ENCODE measurements at regions of chr11 and their contacts with region 1.

Region 1: GRCh38 chr11:23112987-23113886 is 253.0 kb upstream of the CCDC179 start:
- DNase-seq: peak; percentile 63
- ATAC-seq: peak; percentile 70
- H3K4me3 ChIP-seq: no peak overlapping the region
- H3K27ac ChIP-seq: peak overlapping the region; percentile 75; the same call in 1 of the 2 replicates
- H3K4me1 ChIP-seq: peaks cover 9% of the 10 kb centered on the region
- H3K27me3 ChIP-seq: no peaks in the 10 kb centered on the region
- CTCF ChIP-seq: peak; percentile 80
- POLR2A ChIP-seq: no peak
- RAD21 ChIP-seq: peak; percentile 90

Region 2: DNA sequence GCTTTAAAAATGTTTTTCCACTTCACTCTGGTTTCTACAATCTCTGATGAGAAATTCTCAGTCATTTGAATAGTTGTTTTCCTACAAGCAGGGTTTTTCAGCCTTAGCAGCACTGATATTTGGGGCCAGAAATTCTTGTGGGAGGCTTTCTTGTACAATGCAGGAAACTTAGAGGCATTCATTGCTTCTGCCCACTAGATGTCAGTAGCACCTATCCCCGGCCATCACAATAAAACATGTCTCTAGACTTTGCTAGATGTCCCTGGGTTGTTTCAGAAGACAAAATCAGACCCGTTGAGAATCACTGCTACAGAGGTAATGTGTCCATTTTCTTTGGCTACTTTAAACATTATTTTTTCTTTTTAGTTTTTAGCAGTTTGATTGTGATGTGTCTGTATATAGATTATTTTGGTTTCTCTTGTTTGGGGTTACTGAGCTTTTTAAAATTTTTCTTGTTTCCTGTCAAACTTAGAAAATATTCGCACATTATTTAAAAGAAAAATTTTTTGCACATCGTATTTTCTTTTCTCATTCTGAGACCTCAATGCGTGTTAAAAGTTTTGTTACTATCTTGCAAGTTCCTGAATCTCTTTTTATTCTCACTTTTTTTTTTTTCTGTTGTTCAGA is 192.2 kb before region 1 on chr11:
- CTCF ChIA-PET with region 1: no interaction called
- POLR2A ChIA-PET with region 1: no interaction called
- dilution Hi-C with region 1: no loop called
- in situ Hi-C with region 1: no loop called
- intact Hi-C with region 1: loop called (anchors 1 kb)
- DNase-seq: peak; percentile 76
- ATAC-seq: peak; percentile 95
- H3K4me3 ChIP-seq: no peak overlapping the region
- H3K27ac ChIP-seq: no peak overlapping the region
- H3K4me1 ChIP-seq: peaks cover 2% of the 10 kb centered on the region; the same call in 1 of the 2 replicates
- H3K27me3 ChIP-seq: no peaks in the 10 kb centered on the region
- CTCF ChIP-seq: peak; percentile 79
- POLR2A ChIP-seq: no peak
- RAD21 ChIP-seq: peak; percentile 76

Region 3: DNA sequence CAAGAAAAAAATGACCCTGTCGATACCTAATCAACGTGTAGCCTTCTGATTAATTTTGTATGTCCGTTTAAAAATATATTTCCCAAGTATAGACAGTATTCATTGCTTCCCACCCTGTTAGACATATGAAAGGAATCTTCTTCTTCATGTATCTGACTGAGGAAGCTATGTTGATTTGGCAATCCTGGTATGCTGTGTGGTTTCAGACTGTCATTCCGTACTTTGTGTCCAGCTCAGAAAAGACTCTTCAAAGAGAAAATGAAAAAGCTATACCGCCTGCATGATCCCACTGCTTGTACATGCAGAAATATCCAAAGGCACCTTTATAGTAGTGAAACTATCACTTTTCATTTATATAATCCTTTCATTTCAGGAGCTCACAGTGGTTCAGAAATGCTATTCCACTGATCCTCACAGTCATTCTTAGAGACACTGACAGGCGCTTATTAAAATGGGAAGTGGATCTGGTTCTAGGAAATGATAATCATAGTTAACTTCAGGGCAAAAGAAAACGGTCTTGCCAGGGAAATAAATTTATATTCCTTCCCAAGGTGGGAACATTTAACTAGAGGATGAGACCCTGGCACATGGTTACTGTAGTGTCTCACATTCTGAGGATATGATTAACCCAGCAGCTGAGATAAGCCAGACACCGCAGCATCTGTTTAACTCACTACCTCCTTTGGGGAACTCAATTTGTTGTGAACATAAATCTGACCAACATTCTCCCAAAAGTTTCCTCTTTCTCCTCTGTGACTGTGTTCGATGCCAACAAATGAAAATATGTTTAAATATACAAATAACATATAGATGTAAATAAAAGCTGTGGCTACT is 784.4 kb after region 1 on chr11:
- CTCF ChIA-PET with region 1: no interaction called
- POLR2A ChIA-PET with region 1: no interaction called
- dilution Hi-C with region 1: no loop called
- in situ Hi-C with region 1: no loop called
- intact Hi-C with region 1: loop called (anchors 10 kb)
- DNase-seq: peak; percentile 94
- ATAC-seq: peak; percentile 92
- H3K4me3 ChIP-seq: peak overlapping the region; percentile 29; the same call in 1 of the 2 replicates
- H3K27ac ChIP-seq: peak overlapping the region; percentile 99
- H3K4me1 ChIP-seq: peaks cover 13% of the 10 kb centered on the region
- H3K27me3 ChIP-seq: no peaks in the 10 kb centered on the region
- CTCF ChIP-seq: no peak
- POLR2A ChIP-seq: no peak
- RAD21 ChIP-seq: no peak; the same call in 1 of the 2 replicates

Region 4: DNA sequence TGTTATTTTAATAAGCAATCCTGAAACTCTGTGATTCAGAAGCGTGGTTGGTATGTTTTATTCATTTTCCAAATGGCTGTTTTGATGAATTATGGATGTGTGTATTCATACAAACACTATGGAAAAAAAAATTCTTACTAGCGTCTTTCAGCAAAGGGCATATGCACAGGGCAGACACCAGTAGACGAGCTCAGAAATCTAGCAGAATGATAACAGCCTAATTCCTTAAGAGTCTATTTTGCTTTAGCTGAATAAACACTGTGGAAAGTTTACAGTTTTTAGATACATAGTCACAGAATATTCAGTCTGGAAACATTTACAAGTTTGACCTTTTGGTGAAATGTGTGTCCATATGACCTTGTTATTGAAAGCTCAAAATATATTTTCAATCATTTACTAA is 964.8 kb after region 1 on chr11:
- CTCF ChIA-PET with region 1: interaction called, 4 read pairs
- POLR2A ChIA-PET with region 1: no interaction called
- dilution Hi-C with region 1: no loop called
- in situ Hi-C with region 1: no loop called
- intact Hi-C with region 1: loop called (anchors 10 kb)
- DNase-seq: peak; percentile 87
- ATAC-seq: peak; percentile 88
- H3K4me3 ChIP-seq: no peak overlapping the region
- H3K27ac ChIP-seq: peak overlapping the region; percentile 99; the same call in 1 of the 2 replicates
- H3K4me1 ChIP-seq: peaks cover 14% of the 10 kb centered on the region
- H3K27me3 ChIP-seq: no peaks in the 10 kb centered on the region
- CTCF ChIP-seq: no peak
- POLR2A ChIP-seq: no peak
- RAD21 ChIP-seq: no peak

Measured in IMR-90 (cell line).